ENCODE measurements at regions of chr3 and their contacts with region 1.

Region 1: DNA sequence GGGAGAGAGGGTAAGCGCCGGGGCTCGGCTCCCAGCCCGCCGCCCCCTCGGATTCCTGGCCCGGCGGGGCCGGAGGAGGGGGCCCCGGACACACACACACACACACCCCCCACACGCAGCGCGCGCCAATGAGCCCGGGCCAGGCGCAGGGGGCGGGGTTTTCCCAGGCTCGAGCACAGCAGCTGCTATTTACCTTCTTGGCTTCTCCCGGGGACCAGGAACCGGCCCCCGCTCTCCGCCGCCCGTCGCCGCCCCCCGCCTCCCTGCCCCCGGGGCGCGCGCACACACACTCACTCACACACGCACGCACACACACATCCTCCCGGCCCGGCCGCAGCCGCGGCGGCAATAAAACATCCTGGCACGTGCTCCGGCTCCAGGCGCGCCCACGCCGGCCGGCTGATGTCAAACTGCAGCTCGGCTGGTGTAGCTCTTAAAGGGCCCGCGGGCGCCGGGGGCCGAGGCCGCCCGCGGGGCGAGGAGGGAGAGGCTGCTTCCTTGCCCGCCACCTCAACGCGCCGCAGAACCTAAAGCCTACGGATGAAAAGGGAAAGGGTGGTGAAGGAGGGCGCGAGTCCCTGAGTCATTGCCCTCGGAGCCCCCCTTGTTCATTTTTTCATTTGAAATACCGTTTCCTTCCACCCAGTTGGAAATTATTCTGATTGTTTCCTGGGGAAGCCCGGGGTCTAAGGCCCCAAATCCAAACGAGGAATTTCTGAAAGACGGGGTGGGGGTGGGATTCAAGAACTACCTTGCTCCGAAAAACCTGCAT is 1.0 kb upstream of the HES1 start:
- DNase-seq: peak; percentile 72

Region 2: DNA sequence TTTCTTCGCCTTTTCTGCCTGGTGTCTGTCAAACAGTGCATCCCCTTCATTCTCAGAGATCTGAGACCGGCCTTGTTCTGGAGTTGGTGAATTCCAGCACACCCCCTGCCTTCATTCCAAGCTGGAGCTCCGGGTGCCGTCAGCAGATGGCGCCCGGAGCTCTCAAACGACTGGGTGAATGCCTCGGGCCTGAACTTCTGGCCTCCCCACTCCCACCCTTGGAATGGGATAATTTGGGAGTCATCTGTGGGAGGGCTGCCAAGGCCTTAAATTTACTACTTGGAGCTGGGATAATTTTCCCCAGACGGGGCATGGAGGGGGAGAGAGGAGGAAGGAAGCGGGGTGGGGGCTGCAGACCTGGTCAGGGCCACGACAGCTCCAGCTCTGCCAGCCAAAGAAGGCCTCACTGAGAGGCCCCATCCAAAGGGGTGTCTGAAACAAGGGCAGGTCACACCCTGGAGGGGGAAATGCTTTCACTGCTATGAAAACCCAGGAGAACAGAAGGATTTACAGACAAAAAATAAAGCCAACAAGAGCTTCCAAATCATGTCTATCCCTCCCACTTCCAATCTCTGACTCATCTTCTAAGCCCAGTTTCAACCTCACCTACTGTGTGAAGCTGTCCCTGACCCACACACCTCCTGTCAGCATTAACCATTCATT is 354.0 kb before region 1 on chr3:
- CTCF ChIA-PET with region 1: interaction called, 10 read pairs
- POLR2A ChIA-PET with region 1: interaction called, 29 read pairs
- DNase-seq: peak; percentile 71

Region 3: DNA sequence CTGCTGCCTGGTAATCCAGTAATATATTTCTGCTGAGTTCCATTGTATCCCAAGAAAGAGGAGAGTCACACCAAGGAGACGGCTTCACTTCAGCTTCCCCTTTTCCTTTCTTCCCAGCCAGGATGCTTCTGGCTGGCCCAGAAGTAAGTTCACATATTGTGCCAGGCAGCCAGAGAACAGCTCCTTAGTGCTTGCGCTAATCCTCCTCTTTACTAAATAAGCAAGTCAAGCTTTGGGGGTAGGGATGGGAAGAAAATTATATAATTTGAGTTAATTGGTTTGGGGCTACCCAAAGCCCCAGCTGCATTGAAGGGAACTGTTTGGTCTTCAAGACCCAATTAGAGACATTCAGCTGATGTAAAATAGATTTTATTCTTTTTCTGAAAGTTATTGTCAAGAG is 217.8 kb before region 1 on chr3:
- CTCF ChIA-PET with region 1: no interaction called
- POLR2A ChIA-PET with region 1: no interaction called
- DNase-seq: no peak

Region 4: GRCh38 chr3:194003125-194004057 is 131.6 kb before region 1 on chr3:
- CTCF ChIA-PET with region 1: interaction called, 6 read pairs
- POLR2A ChIA-PET with region 1: interaction called, 43 read pairs
- DNase-seq: peak; percentile 71

Region 5: GRCh38 chr3:194089357-194090177 is 45.4 kb before region 1 on chr3:
- CTCF ChIA-PET with region 1: no interaction called
- POLR2A ChIA-PET with region 1: interaction called, 11 read pairs
- DNase-seq: peak; percentile 35

Region 6: GRCh38 chr3:194123726-194124125 is 11.2 kb before region 1 on chr3:
- CTCF ChIA-PET with region 1: no interaction called
- POLR2A ChIA-PET with region 1: interaction called, 11 read pairs
- DNase-seq: no peak

Region 7: DNA sequence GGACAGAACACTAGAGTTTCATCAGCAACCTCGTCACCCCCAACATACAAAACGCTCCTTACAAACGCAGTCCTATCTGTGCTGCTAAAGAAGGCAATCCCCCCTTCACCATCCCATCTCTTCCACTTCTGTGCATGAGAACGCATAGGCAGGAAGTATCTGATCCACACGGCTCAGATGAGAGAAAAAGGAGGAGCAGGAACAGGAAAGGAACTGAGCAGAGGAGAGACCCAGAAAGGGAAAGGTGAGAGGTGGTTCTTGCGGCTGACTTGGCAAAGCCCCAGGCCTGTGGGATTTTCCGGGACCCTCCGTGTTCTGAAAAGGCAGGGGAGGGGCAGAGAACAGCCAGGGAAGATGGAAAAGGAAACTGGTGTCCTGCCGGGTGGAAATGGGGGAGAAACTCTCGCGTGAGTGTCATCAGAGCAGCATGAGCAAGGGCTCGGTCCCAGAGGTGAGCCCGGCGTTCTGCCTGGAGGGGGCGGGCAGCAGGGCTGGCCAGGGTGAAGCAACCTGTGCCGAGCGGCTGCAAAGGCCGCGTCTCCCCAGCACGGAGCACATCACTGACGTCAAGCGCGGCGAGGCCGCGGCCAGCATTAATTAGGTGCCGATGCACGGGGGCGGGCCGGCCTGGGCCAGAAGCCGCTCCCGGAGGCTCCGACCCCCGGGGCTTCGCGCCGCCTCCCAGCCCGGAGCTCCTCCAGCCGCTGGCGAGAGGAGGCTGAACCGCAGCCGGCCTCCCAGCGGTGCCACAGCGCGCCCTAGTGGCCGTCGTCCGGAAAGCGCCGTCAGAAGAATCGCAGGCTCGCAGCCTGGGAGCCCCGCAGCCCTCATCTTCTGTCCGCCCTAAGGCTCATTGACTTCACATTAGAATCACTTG is 180.4 kb after region 1 on chr3:
- CTCF ChIA-PET with region 1: interaction called, 25 read pairs
- POLR2A ChIA-PET with region 1: interaction called, 41 read pairs
- DNase-seq: peak; percentile 84